ENCODE measurements at regions of chr3 and their contacts with region 1.

Region 1: DNA sequence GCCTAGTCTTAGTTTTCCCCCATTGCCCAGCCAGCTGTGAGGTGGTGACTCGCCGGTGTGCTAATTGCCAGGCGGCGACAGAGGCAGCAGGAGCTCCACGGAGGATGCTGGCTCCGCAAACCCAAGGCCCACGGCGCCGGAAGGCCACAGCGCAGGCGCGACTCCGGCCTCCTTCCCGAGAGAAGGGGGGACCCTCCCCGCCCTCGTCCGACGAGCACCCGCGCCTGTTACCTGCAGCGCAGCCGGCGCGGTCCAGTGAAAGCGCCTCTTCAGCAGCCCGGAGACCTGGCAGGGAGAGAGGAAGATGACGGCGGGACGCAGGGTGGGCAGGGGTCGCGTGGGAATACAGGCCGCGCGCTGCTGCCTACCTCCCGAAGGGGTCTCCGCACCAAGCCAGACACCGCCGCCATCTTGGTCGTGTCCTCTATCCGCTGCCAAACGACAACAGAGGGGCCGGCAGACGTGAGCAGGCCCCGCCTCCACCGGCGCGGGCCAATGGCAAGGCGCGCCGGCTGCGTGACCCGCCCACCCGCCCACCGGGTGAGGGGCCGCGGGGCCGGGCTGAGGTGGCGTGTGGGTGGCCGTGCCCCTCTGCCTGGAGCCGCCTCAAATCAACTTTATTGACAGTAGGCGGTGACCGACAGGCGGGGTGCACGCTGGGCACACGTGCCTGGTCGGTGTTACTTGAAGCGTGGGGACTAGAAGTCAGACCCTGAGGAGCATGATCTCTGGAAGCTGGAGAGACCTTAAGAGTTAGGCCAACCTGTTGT is at the start of gene PDHB:
- DNase-seq: peak; percentile 89
- H3K4me3 Mint-ChIP-seq: peak within 1 kb of the TSS; percentile 88
- H3K27ac Mint-ChIP-seq: peak within 1 kb of the TSS; percentile 91
- H3K4me1 Mint-ChIP-seq: peaks cover 29% of the 10 kb centered on the region
- H3K27me3 Mint-ChIP-seq: no peaks in the 10 kb centered on the region
- total RNA-seq, gene PDHB: 62.0 and 68.1 TPM in 2 replicates

Region 2: DNA sequence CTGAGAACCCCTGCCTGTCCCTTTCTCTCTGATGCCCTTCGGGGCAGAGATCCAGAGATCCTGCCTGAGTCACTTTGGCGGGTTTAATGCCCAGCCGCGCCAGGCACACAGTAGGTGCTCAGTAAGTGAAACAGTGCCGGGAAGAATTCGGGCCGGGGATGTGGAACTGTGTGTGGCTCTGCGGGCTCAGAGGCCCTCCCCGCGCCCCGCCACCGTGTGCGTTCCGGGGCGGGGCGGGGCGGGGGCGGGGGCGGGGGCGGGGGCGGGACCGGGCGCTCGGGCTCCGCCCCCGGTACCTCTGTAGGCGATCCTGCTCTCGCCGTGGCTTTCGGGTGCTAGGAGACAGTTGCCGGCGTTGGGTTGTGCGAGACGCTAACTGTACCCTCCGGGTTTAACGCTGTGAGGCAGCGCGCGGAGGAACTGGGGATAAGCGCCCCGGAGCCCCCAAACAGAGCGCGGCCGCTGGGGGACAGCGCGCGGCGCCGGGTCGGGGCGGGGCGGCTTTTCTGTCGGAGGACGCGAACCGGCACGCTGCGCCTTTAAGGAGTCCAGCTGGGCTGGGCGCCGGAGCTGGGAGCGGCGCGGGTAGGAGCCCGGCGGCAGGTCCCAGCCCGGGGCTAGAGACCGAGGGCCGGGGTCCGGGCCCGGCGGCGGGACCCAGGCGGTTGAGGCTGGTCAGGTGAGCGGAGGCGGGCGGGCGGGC is 196.2 kb before region 1 on chr3 and contains the start of gene ABHD6:
- intact Hi-C with region 1: loop called (anchors 1 kb)
- DNase-seq: peak; percentile 78
- H3K4me3 Mint-ChIP-seq: peak within 1 kb of the TSS; percentile 90
- H3K27ac Mint-ChIP-seq: peak within 1 kb of the TSS; percentile 67
- H3K4me1 Mint-ChIP-seq: peaks cover 12% of the 10 kb centered on the region
- H3K27me3 Mint-ChIP-seq: peaks cover 32% of the 10 kb centered on the region
- total RNA-seq, gene ABHD6: 9.2 and 10.1 TPM in 2 replicates

Region 3: DNA sequence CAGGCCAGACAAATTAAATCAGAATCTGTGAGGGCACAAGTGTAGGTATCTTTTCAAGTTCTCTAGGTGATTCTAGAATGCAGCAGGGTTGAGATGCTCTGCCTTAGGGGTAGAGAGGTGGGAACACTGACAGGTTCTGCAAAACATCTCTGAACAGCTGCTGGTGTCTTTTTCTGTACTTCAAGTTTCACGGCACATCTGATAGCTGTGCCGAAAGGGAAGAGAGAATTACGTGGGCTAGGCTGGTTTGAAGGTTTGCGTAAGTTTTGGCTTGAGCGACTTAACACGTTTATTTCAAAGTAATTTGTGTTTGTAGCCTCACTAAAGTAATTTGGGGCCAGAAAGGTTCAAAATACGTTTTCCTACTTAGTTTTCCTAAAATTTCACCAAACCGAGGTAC is 78.4 kb before region 1 on chr3:
- intact Hi-C with region 1: loop called (anchors 5 kb)
- DNase-seq: no peak
- H3K4me3 Mint-ChIP-seq: no peak overlapping the region
- H3K27ac Mint-ChIP-seq: peak overlapping the region; percentile 96
- H3K4me1 Mint-ChIP-seq: peaks cover 75% of the 10 kb centered on the region
- H3K27me3 Mint-ChIP-seq: no peaks in the 10 kb centered on the region

Region 4: DNA sequence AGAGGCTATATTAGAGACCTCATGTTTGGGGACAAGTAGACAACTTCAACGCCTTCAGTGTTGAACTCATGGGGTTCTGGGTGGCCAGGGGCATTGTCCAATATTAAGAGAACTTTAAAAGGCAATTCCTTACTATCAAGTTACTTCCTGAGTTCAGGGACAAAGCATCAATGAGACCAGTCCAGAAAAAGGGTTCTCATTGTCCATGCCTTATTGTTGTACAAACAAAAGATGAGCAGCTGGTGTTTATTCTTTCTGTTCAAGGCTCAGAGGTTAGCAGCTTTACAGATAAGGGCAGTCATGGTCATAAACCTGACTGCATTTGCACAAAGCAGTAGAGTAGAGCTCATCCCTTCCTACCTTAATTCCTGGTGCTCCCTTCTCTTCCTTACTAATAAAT is 18.6 kb after region 1 on chr3:
- intact Hi-C with region 1: no loop called
- DNase-seq: no peak
- H3K4me3 Mint-ChIP-seq: no peak overlapping the region
- H3K27ac Mint-ChIP-seq: no peak overlapping the region
- H3K4me1 Mint-ChIP-seq: no peaks in the 10 kb centered on the region
- H3K27me3 Mint-ChIP-seq: peaks cover 10% of the 10 kb centered on the region

Region 5: GRCh38 chr3:58471025-58471887 is 37.7 kb after region 1 on chr3:
- intact Hi-C with region 1: loop called (anchors 1 kb)
- DNase-seq: peak; percentile 73
- H3K4me3 Mint-ChIP-seq: peak overlapping the region; percentile 37
- H3K27ac Mint-ChIP-seq: peak overlapping the region; percentile 68
- H3K4me1 Mint-ChIP-seq: peaks cover 59% of the 10 kb centered on the region
- H3K27me3 Mint-ChIP-seq: peaks cover 8% of the 10 kb centered on the region

Region 6: DNA sequence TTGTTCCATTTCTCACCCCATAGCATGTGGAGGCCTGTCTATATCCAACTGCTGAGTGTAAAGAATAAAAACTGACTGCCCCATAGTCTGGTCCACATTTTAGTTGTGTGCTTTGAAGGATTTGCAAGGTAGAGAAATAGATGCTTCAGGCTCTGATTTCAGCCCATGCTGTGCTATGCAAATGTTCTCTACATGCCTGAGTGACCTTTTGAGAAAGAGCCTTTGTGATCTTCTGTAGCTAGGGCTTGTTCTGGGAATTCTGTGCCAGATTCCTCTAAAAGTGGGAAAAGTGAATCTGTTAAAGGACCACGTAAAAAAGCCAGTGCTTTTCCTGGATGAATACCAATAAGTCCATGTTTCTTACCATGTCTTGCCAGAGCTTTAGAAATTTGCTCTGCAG is 63.5 kb after region 1 on chr3:
- intact Hi-C with region 1: no loop called
- DNase-seq: no peak
- H3K4me3 Mint-ChIP-seq: no peak overlapping the region
- H3K27ac Mint-ChIP-seq: no peak overlapping the region
- H3K4me1 Mint-ChIP-seq: peaks cover 35% of the 10 kb centered on the region
- H3K27me3 Mint-ChIP-seq: peaks cover 3% of the 10 kb centered on the region

Region 7: DNA sequence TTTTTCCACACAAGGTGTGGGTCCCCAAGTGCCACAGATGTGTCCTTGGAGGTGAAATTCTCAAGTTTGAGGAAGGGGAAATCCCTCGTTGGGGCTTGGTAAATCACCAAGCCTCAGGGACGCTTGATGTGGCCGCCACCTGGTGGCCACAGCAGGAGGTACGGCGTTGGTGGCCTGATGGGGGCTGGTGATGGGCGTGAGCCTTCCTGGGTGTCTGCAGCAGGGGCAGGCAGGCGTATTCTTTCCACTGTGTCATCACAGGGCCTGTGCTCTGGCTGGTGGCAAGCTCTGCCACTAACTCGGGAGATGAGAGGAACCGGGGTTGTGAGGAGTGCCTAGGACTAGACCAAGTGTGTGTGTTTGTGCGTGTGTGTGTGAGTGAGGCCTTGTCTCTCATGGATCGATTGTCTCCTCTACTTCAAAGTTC is 99.2 kb after region 1 on chr3:
- intact Hi-C with region 1: loop called (anchors 1 kb)
- DNase-seq: peak; percentile 75
- H3K4me3 Mint-ChIP-seq: no peak overlapping the region
- H3K27ac Mint-ChIP-seq: peak overlapping the region; percentile 8
- H3K4me1 Mint-ChIP-seq: peaks cover 13% of the 10 kb centered on the region
- H3K27me3 Mint-ChIP-seq: peaks cover 15% of the 10 kb centered on the region

Region 8: GRCh38 chr3:58754074-58754473 is 320.5 kb after region 1 on chr3:
- intact Hi-C with region 1: no loop called
- DNase-seq: no peak
- H3K4me3 Mint-ChIP-seq: no peak overlapping the region
- H3K27ac Mint-ChIP-seq: no peak overlapping the region
- H3K4me1 Mint-ChIP-seq: no peaks in the 10 kb centered on the region
- H3K27me3 Mint-ChIP-seq: peaks cover 3% of the 10 kb centered on the region

Region 9: DNA sequence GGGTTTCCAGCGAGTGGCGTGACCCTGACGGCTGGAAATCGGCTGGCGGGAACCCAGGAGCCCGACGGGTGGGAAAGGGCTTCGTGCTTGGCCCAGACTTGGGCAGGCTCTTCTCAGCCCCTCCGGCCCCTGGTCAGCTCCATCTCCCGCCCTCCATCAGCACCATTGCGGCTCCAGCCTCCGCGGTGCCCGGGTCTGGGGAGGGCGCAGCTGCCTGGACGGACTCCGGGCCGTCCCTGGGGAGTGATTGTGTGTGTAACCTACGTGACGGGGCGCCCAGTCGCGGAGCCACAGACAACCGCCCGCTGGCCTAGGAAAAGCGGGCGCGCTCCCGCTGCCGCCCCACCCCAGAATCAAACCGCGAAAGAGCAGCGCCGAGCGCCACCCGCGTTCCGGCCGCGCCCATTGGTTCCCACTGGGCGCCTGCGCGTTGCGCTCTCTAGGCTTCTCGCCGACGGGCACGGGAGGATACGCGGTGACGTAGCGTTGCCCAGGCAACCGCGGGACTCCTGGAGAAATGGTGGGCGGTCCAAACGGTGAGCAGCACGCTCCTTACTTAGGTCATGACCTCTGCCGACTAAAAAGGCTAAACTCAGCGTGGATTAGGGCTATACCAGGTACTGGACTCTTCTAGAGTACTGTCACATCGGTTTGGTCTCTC is 616.2 kb after region 1 on chr3 and contains the start of gene CFAP20DC:
- intact Hi-C with region 1: loop called (anchors 2 kb)
- DNase-seq: peak; percentile 90
- H3K4me3 Mint-ChIP-seq: peak within 1 kb of the TSS; percentile 65
- H3K27ac Mint-ChIP-seq: peak within 1 kb of the TSS; percentile 67
- H3K4me1 Mint-ChIP-seq: peaks cover 15% of the 10 kb centered on the region
- H3K27me3 Mint-ChIP-seq: peaks cover 14% of the 10 kb centered on the region
- total RNA-seq, gene CFAP20DC: 0.86 and 1.2 TPM in 2 replicates